HCT116 (cell line): ENCODE measurements at regions of chr20 and their contacts with region 1.

Region 1: DNA sequence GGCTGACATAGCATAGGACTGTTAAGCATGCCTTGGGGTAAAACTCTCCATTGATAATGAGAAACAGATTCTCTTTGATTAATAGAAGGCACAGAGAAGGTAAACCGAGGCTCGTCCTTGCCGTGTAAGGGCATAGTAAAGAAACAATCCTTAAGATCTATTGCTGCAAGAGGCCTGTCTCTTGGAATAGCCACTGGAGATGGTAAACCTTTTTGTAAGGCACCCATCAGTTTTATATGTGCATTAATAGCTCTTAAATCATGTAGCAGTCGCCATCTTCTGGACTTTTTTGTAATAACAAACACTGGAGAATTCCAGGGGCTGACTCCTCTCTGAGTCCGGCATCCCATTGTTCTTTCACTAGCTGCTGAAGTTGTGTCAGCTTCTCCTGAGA is 8.4 kb upstream of the ABHD12 start:
- DNase-seq: peak; percentile 68
- ATAC-seq: peak; percentile 96
- H3K4me3 ChIP-seq: no peak overlapping the region
- H3K27ac ChIP-seq: no peak overlapping the region
- H3K4me1 ChIP-seq: 0 out of 4 replicates have a peak, but pooled peaks cover 0 to 2% of the 10 kb centered on the region in 2 experiments
- H3K27me3 ChIP-seq: no peaks in the 10 kb centered on the region
- CTCF ChIP-seq: peak; percentile 49 to 88 (median 67)
- POLR2A ChIP-seq: no peak
- RAD21 ChIP-seq: peak; percentile 84

Region 2: GRCh38 chr20:25294459-25295385 is 104.3 kb before region 1 on chr20:
- CTCF ChIA-PET with region 1: interaction called, 44 read pairs
- POLR2A ChIA-PET with region 1: no interaction called
- RAD21 ChIA-PET with region 1: interaction called, 3 read pairs
- intact Hi-C with region 1: loop called (anchors 1 kb)
- DNase-seq: peak; percentile 35
- ATAC-seq: peak; percentile 91
- H3K4me3 ChIP-seq: no peak overlapping the region
- H3K27ac ChIP-seq: peak overlapping the region; percentile 57
- H3K4me1 ChIP-seq: peaks cover 15 to 22% of the 10 kb centered on the region in 2 experiments
- H3K27me3 ChIP-seq: no peaks in the 10 kb centered on the region
- CTCF ChIP-seq: peak; percentile 96 to 99 (median 99)
- POLR2A ChIP-seq: no peak
- RAD21 ChIP-seq: peak; percentile 81

Region 3: GRCh38 chr20:25299806-25300205 is 99.2 kb before region 1 on chr20:
- CTCF ChIA-PET with region 1: interaction called, 44 read pairs
- POLR2A ChIA-PET with region 1: no interaction called
- RAD21 ChIA-PET with region 1: interaction called, 3 read pairs
- intact Hi-C with region 1: no loop called
- DNase-seq: no peak
- ATAC-seq: peak; percentile 4; the same call in 1 of the 2 replicates
- H3K4me3 ChIP-seq: no peak overlapping the region
- H3K27ac ChIP-seq: peak overlapping the region; percentile 42; the same call in 1 of the 2 replicates
- H3K4me1 ChIP-seq: peaks cover 29 to 34% of the 10 kb centered on the region in 2 experiments
- H3K27me3 ChIP-seq: no peaks in the 10 kb centered on the region
- CTCF ChIP-seq: no peak
- POLR2A ChIP-seq: no peak
- RAD21 ChIP-seq: no peak